ENCODE measurements at regions of chr3 and their contacts with region 1.

Region 1: GRCh38 chr3:47791193-47791855 is 9.6 kb upstream of the SMARCC1 start:
- DNase-seq: no peak
- H3K4me3 ChIP-seq: no peak overlapping the region
- H3K27ac ChIP-seq: no peak overlapping the region
- H3K4me1 ChIP-seq: no peaks in the 10 kb centered on the region
- H3K27me3 ChIP-seq: no peaks in the 10 kb centered on the region
- CTCF ChIP-seq: no peak

Region 2: GRCh38 chr3:46895204-46895660 is 896.1 kb before region 1 on chr3:
- CTCF ChIA-PET with region 1: no interaction called
- POLR2A ChIA-PET with region 1: no interaction called
- intact Hi-C with region 1: no loop called
- DNase-seq: peak in 1 of 2 experiments; percentile 68
- H3K4me3 ChIP-seq: no peak overlapping the region
- H3K27ac ChIP-seq: no peak overlapping the region
- H3K4me1 ChIP-seq: 0 out of 2 replicates have a peak, but pooled peaks cover 4% of the 10 kb centered on the region
- H3K27me3 ChIP-seq: no peaks in the 10 kb centered on the region
- CTCF ChIP-seq: peak; percentile 86

Region 3: DNA sequence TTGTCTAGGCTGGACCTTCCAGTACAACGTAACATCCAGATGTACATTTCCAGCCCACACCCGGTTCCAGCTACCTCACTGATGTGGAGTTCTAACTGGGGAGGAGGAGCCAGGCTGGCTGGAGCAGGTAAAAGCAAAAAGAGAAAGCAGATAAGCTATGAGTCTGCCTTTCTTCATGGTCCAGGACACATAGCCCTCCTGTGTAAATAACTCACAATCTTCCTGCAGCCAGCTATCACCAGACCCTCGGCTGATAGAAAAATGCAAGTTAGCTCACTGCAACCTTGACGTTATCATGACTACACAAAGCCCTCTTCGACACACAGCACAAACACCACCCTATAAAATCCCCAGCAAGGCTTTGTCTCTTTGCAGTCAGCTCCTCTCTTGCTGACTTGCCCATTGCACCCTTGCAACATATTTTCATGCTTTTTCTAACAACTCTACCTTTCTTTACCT is 257.3 kb before region 1 on chr3:
- CTCF ChIA-PET with region 1: no interaction called
- POLR2A ChIA-PET with region 1: interaction called, 16 read pairs
- intact Hi-C with region 1: no loop called
- DNase-seq: no peak
- H3K4me3 ChIP-seq: no peak overlapping the region
- H3K27ac ChIP-seq: no peak overlapping the region
- H3K4me1 ChIP-seq: no peaks in the 10 kb centered on the region
- H3K27me3 ChIP-seq: no peaks in the 10 kb centered on the region
- CTCF ChIP-seq: no peak

Measured in PC-9 (cell line).